GM10248 (cell line): ENCODE measurements at regions of chr12 and their contacts with region 1.

Region 1: GRCh38 chr12:91382081-91382543 is 199.5 kb upstream of the DCN start:
- DNase-seq: peak; percentile 32
- CTCF ChIP-seq: peak; percentile 77

Region 2: GRCh38 chr12:91367234-91367849 is 14.8 kb before region 1 on chr12:
- CTCF ChIA-PET with region 1: interaction called, 46 read pairs
- POLR2A ChIA-PET with region 1: no interaction called
- DNase-seq: peak; percentile 9
- CTCF ChIP-seq: peak; percentile 28

Region 3: DNA sequence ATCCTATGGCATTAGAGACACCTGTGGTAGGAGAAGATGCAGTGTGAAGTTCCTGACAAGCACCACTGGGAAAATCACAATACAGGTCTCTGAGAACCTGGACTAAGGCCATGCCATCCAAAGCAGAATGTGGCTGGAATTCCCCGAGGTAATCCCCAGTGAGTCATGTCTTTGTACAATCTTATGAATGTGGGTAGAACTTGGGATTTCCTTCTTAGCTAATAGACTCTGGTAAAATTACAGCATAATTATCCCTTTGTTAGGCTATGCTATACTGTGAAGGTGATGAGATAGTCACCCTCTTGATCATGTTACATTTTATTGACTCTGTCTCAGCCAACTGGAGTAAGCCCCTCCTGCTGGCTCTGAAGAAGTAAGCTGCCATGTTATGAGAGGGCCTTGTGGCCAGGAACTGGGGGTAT is 24.8 kb after region 1 on chr12:
- CTCF ChIA-PET with region 1: interaction called, 32 read pairs
- POLR2A ChIA-PET with region 1: no interaction called
- DNase-seq: peak; percentile 8
- CTCF ChIP-seq: no peak

Region 4: DNA sequence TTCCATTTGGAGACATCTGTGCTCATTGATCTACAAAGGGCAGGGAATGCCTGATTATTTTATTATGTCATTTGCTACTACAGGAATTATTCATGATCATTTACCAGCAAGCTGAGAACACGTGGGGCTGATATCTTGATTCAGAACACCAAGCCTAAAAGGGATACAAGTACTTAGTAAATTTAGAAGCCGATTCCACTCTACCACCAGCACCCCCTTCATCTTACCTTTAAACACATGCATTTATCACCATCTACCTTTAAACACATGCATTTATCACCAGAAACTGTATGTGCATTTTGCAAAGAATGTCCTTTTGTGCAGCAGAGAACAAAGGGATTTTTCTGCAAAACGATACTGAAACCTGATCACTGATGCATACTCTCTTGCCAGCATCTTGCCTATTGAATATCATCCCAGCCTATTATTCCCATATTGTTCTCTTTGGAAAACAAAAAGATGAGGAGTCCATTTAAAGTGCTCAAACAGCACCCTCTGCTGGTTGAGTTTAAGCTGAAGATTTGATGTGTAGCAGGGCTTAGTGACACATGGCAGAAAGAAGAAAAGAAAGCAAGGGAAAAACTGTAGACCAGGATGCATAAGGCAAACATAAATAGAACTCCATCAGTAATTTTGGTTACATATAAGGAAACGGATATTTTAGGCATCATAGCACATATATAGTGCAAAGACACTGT is 1188.1 kb after region 1 on chr12:
- CTCF ChIA-PET with region 1: interaction called, 25 read pairs
- POLR2A ChIA-PET with region 1: no interaction called
- DNase-seq: peak; percentile 47
- CTCF ChIP-seq: peak; percentile 73